Gastrocnemius medialis (tissue), 4 donors: ENCODE measurements at regions of chr10 and their contacts with region 1.

Region 1: DNA sequence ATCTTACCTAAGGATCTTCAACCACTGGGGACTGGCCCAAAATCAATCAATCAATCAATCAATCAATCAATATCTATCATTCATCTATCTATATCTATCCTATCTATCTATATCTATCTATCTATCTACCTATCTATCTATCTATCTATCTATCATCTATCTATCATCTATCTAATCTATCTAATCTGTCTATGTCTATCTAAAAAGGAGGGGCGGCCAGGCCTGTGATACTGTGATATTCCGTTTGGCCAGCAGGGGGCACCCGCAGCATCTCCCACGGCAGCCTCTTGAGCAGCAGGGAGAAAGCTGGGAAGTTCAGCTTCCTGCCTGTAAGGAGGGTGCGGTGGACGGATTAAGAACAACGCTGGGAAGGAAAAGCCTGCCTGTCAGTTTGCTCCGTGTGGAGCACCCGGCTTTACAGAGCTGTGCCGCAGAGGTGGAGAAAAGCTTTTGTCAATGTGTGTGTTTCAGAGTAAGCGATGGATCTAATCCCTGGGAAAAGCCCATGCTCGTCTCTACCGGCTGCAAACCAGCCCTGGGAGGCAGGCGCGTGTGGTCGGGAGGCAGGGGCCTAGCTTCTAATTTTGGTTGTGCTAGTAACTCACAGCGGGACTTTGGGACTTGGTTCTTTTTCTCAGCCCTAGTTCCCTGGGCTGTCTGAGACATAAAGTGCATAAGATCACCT is 125.0 kb downstream of the SH2D4B start:
- DNase-seq: peak; percentile 35 to 57
- ATAC-seq: peak; percentile 85 to 92
- H3K4me3 ChIP-seq: peak overlapping the region in 3 of 4 donors; percentile 32 to 44 (median 37)
- H3K27ac ChIP-seq: peak overlapping the region in 2 of 4 donors; percentile 30 to 31
- H3K4me1 ChIP-seq: no peaks in the 10 kb centered on the region
- H3K27me3 ChIP-seq: no peaks in the 10 kb centered on the region
- CTCF ChIP-seq: peak; percentile 58 to 82 (median 72)
- POLR2A ChIP-seq: no peak

Region 2: GRCh38 chr10:80924063-80924952 is 261.6 kb after region 1 on chr10:
- in situ Hi-C with region 1: no loop called
- intact Hi-C with region 1: loop called (anchors 10 kb)
- DNase-seq: no peak
- ATAC-seq: no peak
- H3K4me3 ChIP-seq: no peak overlapping the region
- H3K27ac ChIP-seq: no peak overlapping the region
- H3K4me1 ChIP-seq: no peaks in the 10 kb centered on the region
- H3K27me3 ChIP-seq: no peaks in the 10 kb centered on the region
- CTCF ChIP-seq: peak in 3 of 5 experiments; percentile 28 to 56 (median 41)
- POLR2A ChIP-seq: no peak